ENCODE measurements at regions of chr11 and their contacts with region 1.

Region 1: DNA sequence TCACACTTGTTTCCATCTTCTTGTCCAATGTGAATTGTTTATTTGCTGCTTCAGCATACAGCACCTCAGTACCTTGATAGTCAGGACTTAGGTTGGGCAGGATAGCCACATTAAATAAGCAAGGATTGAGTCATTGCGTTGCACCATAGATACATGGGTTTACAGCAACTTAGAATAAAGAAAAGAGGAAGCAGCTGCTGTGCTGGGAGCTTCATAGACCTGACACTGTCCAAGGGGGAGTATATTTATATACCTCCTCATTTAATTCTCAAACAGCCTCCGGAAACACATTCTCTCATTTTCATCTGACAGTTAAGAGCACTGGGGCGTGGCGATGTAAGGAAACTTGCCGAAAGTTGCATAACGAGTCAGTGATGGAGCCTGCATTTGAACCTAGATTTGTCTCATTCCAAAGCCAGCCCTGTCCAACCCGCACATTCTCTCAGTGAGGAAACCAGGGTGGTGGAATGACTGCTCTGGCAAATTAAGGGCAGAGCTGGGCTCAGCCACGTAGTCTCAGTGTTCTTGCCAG is 42.2 kb downstream of the UBASH3B start:
- DNase-seq: peak; percentile 61
- ATAC-seq: peak; percentile 79
- H3K4me3 Mint-ChIP-seq: peak overlapping the region; percentile 17
- H3K27ac Mint-ChIP-seq: peak overlapping the region; percentile 82
- H3K4me1 Mint-ChIP-seq: peaks cover 82% of the 10 kb centered on the region
- H3K27me3 Mint-ChIP-seq: no peaks in the 10 kb centered on the region

Region 2: GRCh38 chr11:122309262-122309925 is 388.3 kb before region 1 on chr11:
- CTCF ChIA-PET with region 1: no interaction called
- POLR2A ChIA-PET with region 1: no interaction called
- intact Hi-C with region 1: no loop called
- DNase-seq: no peak
- ATAC-seq: no peak
- H3K4me3 Mint-ChIP-seq: no peak overlapping the region
- H3K27ac Mint-ChIP-seq: no peak overlapping the region
- H3K4me1 Mint-ChIP-seq: no peaks in the 10 kb centered on the region
- H3K27me3 Mint-ChIP-seq: peaks cover 5% of the 10 kb centered on the region

Region 3: DNA sequence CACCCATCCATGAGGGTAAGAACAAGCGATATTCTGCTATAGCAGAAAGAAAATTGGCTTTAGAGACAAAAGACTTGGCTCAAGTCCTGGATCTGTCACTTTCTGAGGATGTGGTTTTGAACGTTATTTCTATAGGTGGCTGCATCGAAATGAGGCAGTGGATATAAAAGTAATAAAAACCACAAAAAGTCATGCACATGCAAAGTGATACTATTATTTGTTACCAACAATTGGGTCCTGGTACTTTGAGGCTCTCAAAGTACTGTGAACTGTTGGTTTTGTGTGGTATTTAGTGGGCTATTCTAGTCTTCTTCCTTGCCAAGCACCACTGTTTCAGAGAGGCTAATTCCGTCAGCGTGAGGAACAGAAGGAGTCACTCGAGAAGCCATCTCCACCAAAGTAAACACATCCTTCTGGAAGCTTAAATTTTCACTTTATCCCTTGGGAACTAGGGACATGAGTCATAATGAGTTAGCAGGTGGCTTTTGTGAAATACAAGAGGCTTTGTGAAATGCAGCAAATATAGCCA is 29.1 kb before region 1 on chr11:
- CTCF ChIA-PET with region 1: interaction called, 3 read pairs
- POLR2A ChIA-PET with region 1: interaction called, 3 read pairs
- intact Hi-C with region 1: loop called in 1 of 2 experiments (anchors 2 kb)
- DNase-seq: no peak
- ATAC-seq: peak; percentile 82
- H3K4me3 Mint-ChIP-seq: no peak overlapping the region
- H3K27ac Mint-ChIP-seq: peak overlapping the region; percentile 47
- H3K4me1 Mint-ChIP-seq: peaks cover 66% of the 10 kb centered on the region
- H3K27me3 Mint-ChIP-seq: no peaks in the 10 kb centered on the region

Region 4: GRCh38 chr11:122721964-122722266 is 24.2 kb after region 1 on chr11:
- CTCF ChIA-PET with region 1: interaction called, 6 read pairs
- POLR2A ChIA-PET with region 1: interaction called, 3 read pairs
- intact Hi-C with region 1: loop called in 1 of 2 experiments (anchors 2 kb)
- DNase-seq: peak; percentile 42
- ATAC-seq: peak; percentile 72
- H3K4me3 Mint-ChIP-seq: no peak overlapping the region
- H3K27ac Mint-ChIP-seq: no peak overlapping the region
- H3K4me1 Mint-ChIP-seq: peaks cover 65% of the 10 kb centered on the region
- H3K27me3 Mint-ChIP-seq: no peaks in the 10 kb centered on the region

Measured in activated CD4-positive, alpha-beta T cell treated with anti-CD3 and anti-CD28 coated beads for 36 hours (primary cell).